HCT116 (cell line): ENCODE measurements at regions of chr4 and their contacts with region 1.

Region 1: GRCh38 chr4:105698607-105699006 is 9.9 kb downstream of the INTS12 start:
- DNase-seq: no peak
- ATAC-seq: no peak
- H3K4me3 ChIP-seq: no peak overlapping the region
- H3K27ac ChIP-seq: no peak overlapping the region
- H3K4me1 ChIP-seq: no peaks in the 10 kb centered on the region
- H3K27me3 ChIP-seq: no peaks in the 10 kb centered on the region
- CTCF ChIP-seq: no peak
- POLR2A ChIP-seq: no peak
- RAD21 ChIP-seq: no peak

Region 2: DNA sequence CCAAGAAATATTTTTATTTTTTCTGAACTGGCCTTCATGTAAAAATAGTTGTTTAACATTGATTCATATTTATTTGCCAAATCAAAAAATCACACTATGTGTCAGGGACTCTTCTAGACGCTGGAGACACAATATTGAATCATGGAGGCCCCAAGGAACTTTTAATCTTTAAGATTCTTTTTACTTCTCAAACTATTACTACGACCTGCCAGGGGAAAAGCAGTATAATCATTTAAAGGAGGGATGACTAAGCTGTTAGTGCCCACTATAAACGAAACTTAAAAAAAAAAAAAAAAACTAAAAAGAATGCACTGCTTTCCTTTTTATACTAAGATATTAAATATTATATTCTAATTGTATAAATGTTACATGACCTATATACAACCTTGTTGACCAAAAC is 309.4 kb before region 1 on chr4:
- CTCF ChIA-PET with region 1: no interaction called
- POLR2A ChIA-PET with region 1: no interaction called
- RAD21 ChIA-PET with region 1: no interaction called
- intact Hi-C with region 1: no loop called
- DNase-seq: no peak
- ATAC-seq: no peak
- H3K4me3 ChIP-seq: no peak overlapping the region
- H3K27ac ChIP-seq: no peak overlapping the region
- H3K4me1 ChIP-seq: no peaks in the 10 kb centered on the region
- H3K27me3 ChIP-seq: no peaks in the 10 kb centered on the region
- CTCF ChIP-seq: no peak
- POLR2A ChIP-seq: no peak
- RAD21 ChIP-seq: no peak

Region 3: DNA sequence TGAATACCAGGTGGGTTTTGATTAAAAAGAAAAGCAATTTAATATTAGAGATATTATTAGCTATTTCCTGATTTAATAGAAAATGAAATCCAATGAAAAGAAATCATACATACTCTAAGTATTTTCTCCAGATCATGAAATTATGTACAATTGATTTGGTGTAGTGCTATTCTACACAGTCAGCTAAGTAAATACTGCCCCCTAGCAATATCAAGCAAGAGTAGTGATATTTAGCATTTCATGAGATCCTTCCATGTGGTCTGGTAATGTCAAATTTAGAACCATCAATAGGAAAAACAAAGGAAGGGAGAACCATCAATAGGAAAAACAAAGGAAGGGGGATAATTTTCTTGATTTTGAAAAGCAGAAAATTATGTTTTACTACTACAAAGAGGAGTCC is 502.8 kb after region 1 on chr4:
- CTCF ChIA-PET with region 1: no interaction called
- POLR2A ChIA-PET with region 1: no interaction called
- RAD21 ChIA-PET with region 1: no interaction called
- intact Hi-C with region 1: loop called (anchors 10 kb)
- DNase-seq: no peak
- ATAC-seq: peak; percentile 78
- H3K4me3 ChIP-seq: no peak overlapping the region
- H3K27ac ChIP-seq: no peak overlapping the region
- H3K4me1 ChIP-seq: no peaks in the 10 kb centered on the region
- H3K27me3 ChIP-seq: no peaks in the 10 kb centered on the region
- CTCF ChIP-seq: peak; percentile 49 to 71 (median 50); a peak in 5 of 6 replicates
- POLR2A ChIP-seq: no peak
- RAD21 ChIP-seq: peak; percentile 78